WTC11 (cell line): ENCODE measurements at regions of chr1 and their contacts with region 1.

Region 1: GRCh38 chr1:8962812-8963530 is 17.3 kb downstream of the CA6 start:
- DNase-seq: peak; percentile 80
- ATAC-seq: peak; percentile 98
- H3K4me3 Mint-ChIP-seq: no peak overlapping the region
- H3K27ac Mint-ChIP-seq: no peak overlapping the region
- H3K4me1 Mint-ChIP-seq: peaks cover 5% of the 10 kb centered on the region
- H3K27me3 Mint-ChIP-seq: no peaks in the 10 kb centered on the region; the same call in 1 of the 2 replicates
- CTCF ChIP-seq: peak; percentile 55; the same call in 1 of the 2 replicates

Region 2: DNA sequence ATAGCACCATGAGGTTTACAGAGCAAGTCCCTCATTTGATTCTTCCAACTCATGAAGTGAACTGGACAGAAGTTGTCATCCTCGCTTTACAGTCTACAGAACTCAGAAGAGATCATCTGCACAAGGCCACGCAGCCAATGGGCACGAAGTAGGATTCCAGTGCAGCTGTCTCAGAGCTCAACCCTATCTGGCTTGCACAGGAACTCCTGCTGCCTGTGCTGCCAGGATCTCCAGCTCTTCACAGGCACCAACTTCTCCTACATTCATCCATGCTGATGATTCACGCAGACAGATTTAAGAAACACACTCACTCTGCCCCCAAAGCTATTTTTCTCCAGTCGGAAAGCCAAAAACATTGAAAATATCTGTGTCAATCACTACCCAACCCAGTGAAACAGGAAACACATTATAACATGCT is 302.6 kb before region 1 on chr1:
- CTCF ChIA-PET with region 1: no interaction called
- POLR2A ChIA-PET with region 1: no interaction called
- DNase-seq: no peak
- ATAC-seq: no peak; the same call in 1 of the 2 replicates
- H3K4me3 Mint-ChIP-seq: no peak overlapping the region
- H3K27ac Mint-ChIP-seq: no peak overlapping the region
- H3K4me1 Mint-ChIP-seq: peaks cover 15% of the 10 kb centered on the region
- H3K27me3 Mint-ChIP-seq: no peaks in the 10 kb centered on the region
- CTCF ChIP-seq: no peak

Region 3: DNA sequence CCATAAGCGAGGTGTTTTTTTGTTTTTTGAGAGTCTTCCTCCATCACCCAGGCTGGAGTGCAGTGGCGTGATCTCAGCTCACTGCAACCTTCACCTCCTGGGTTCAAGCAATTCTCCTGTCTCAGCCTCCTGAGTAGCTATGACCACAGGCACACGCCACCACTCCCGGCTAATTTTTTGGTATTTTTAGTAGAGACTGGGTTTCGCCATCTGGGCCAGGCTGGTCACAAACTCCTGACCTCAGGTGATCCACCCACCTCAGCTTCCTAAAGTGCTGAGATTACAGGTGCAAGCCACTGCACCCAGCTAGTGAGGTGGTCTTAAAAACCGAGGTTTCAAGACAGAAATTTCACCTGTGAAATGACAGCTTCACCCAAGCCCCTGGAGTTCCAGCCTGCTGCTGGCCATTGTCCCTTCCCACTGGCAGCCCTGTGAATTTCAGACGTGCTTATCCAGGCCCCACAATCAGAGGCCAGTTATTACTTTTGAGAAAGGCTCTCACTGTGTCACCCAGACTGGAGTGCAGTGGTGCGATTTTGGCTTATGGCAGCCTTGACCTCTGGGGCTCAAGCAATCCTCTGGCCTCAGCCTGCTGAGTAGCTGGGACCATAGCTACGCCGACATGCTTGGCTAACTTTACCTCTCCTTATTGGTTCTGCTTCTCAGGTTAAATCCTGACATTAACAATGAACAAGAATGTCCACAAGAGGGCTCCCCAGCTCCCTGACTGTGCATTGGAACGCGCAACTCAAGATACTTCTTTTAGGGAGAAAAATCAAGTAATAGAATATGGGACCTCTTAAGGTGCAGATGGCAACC is 103.9 kb before region 1 on chr1:
- CTCF ChIA-PET with region 1: interaction called, 11 read pairs
- POLR2A ChIA-PET with region 1: no interaction called
- DNase-seq: peak; percentile 47
- ATAC-seq: peak; percentile 14
- H3K4me3 Mint-ChIP-seq: no peak overlapping the region
- H3K27ac Mint-ChIP-seq: peak overlapping the region; percentile 94
- H3K4me1 Mint-ChIP-seq: peaks cover 27% of the 10 kb centered on the region
- H3K27me3 Mint-ChIP-seq: no peaks in the 10 kb centered on the region; the same call in 1 of the 2 replicates
- CTCF ChIP-seq: peak; percentile 30; the same call in 1 of the 2 replicates

Region 4: GRCh38 chr1:8910914-8911313 is 52.1 kb before region 1 on chr1:
- CTCF ChIA-PET with region 1: interaction called, 19 read pairs
- POLR2A ChIA-PET with region 1: interaction called, 3 read pairs
- DNase-seq: no peak
- ATAC-seq: peak; percentile 18
- H3K4me3 Mint-ChIP-seq: no peak overlapping the region
- H3K27ac Mint-ChIP-seq: no peak overlapping the region
- H3K4me1 Mint-ChIP-seq: peaks cover 42% of the 10 kb centered on the region
- H3K27me3 Mint-ChIP-seq: peaks cover 21% of the 10 kb centered on the region
- CTCF ChIP-seq: no peak

Region 5: DNA sequence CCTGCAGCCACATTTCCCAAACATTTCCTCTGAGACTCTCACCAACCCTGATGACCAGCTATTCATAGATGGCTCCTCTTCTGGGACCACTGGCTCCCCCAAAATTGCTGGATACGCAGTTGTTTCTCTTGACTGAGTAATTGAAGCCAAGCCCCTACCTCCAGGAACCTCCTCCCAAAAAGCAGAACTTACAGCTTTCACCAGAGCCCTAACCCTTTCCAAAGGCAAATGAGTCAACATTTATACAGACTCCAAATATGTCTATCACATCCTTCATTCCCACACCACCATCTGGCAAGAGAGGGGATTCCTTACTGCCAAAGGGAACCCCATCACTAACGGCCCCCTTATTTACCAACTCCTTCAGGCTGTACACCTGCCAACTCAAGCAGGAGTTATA is 37.6 kb before region 1 on chr1:
- CTCF ChIA-PET with region 1: interaction called, 10 read pairs
- POLR2A ChIA-PET with region 1: no interaction called
- DNase-seq: no peak
- ATAC-seq: no peak
- H3K4me3 Mint-ChIP-seq: no peak overlapping the region
- H3K27ac Mint-ChIP-seq: no peak overlapping the region
- H3K4me1 Mint-ChIP-seq: no peaks in the 10 kb centered on the region
- H3K27me3 Mint-ChIP-seq: no peaks in the 10 kb centered on the region
- CTCF ChIP-seq: no peak

Region 6: DNA sequence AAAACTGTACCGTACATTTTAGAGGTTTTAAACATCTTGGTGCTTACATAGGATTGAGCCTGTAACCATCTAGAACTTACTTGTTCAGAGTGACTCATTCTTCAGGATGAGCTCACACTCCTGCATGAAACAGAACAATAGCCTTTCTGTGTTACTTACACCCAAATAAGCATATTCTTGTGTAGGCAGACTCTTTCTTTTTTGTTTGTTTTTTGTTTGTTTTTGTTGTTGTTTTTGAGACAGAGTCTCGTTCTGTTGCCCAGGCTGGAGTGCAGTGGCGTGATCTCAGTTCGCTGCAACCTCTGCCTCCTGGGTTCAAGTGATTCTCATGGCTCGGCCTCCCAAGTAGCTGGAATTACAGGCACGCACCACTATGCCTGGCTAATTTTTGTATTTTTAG is 21.1 kb before region 1 on chr1:
- CTCF ChIA-PET with region 1: interaction called, 51 read pairs
- POLR2A ChIA-PET with region 1: no interaction called
- DNase-seq: no peak
- ATAC-seq: no peak
- H3K4me3 Mint-ChIP-seq: no peak overlapping the region
- H3K27ac Mint-ChIP-seq: no peak overlapping the region
- H3K4me1 Mint-ChIP-seq: peaks cover 51% of the 10 kb centered on the region
- H3K27me3 Mint-ChIP-seq: no peaks in the 10 kb centered on the region
- CTCF ChIP-seq: no peak

Region 7: DNA sequence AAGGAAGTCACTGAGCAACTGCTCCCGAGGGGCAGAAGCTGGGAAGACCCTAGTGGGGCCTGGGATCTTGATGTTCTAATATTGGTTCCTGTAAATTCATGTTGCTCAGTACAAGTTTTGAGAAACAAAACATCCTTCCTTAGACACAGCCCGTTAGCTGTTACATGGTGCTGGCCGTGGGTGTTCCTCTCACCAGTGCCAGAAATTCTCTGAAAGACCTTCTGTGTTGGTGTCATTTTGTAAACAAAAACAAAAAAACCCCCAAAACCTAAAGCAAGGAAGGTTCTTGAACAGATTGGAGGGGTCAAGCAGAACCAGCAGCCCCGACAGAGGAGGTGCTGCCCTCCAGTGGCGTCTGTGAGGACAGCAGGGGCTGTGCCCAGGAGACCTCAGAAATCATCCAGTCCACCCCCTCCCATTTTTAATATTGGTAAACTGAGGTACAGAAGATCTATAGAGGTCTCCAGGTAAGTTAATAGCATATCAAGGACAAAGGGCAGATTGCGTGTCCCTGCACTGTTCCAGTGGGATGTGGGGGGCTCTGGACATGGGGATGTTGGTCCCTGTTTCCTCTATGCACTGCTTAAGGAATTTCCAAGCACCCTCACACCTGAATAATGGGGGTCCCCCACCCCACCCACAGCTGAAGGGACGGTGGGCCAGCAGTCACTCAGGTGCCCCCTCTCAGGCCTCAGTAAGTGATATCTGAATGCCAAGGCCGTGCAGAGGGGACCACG is 25.1 kb after region 1 on chr1:
- CTCF ChIA-PET with region 1: interaction called, 45 read pairs
- POLR2A ChIA-PET with region 1: no interaction called
- DNase-seq: peak; percentile 81
- ATAC-seq: peak; percentile 92
- H3K4me3 Mint-ChIP-seq: no peak overlapping the region
- H3K27ac Mint-ChIP-seq: peak overlapping the region; percentile 57; the same call in 1 of the 2 replicates
- H3K4me1 Mint-ChIP-seq: 0 out of 2 replicates have a peak, but pooled peaks cover 2% of the 10 kb centered on the region
- H3K27me3 Mint-ChIP-seq: no peaks in the 10 kb centered on the region
- CTCF ChIP-seq: peak; percentile 82

Region 8: DNA sequence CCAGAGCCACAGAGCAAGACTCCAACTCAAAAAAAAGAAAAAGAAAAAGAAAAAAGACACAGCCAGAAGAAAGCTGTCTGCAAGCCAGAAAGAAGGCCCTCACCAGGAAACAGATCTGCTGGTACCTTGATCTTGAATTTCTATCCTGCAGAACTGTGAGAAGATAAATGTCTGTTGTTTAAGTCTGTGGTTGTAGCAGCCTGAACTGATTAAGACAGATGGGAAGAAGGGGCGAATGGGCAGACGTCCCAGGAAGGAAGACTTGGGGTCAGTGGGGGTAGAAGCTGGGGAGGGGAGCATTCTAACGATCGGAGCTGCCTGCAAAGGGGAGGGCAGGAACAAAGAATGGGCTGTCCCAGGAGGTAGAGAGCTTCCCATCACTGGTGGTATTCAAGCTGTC is 56.9 kb after region 1 on chr1:
- CTCF ChIA-PET with region 1: no interaction called
- POLR2A ChIA-PET with region 1: no interaction called
- DNase-seq: no peak
- ATAC-seq: no peak
- H3K4me3 Mint-ChIP-seq: no peak overlapping the region
- H3K27ac Mint-ChIP-seq: no peak overlapping the region
- H3K4me1 Mint-ChIP-seq: no peaks in the 10 kb centered on the region
- H3K27me3 Mint-ChIP-seq: no peaks in the 10 kb centered on the region
- CTCF ChIP-seq: no peak

Region 9: GRCh38 chr1:9033363-9033762 is 70.4 kb after region 1 on chr1:
- CTCF ChIA-PET with region 1: no interaction called
- POLR2A ChIA-PET with region 1: no interaction called
- DNase-seq: no peak
- ATAC-seq: no peak
- H3K4me3 Mint-ChIP-seq: no peak overlapping the region
- H3K27ac Mint-ChIP-seq: no peak overlapping the region
- H3K4me1 Mint-ChIP-seq: peaks cover 10% of the 10 kb centered on the region
- H3K27me3 Mint-ChIP-seq: peaks cover 3% of the 10 kb centered on the region; the same call in 1 of the 2 replicates
- CTCF ChIP-seq: no peak

Region 10: GRCh38 chr1:9101510-9102146 is 138.7 kb after region 1 on chr1:
- CTCF ChIA-PET with region 1: interaction called, 13 read pairs
- POLR2A ChIA-PET with region 1: no interaction called
- DNase-seq: peak; percentile 68
- ATAC-seq: peak; percentile 96
- H3K4me3 Mint-ChIP-seq: no peak overlapping the region
- H3K27ac Mint-ChIP-seq: no peak overlapping the region
- H3K4me1 Mint-ChIP-seq: peaks cover 5% of the 10 kb centered on the region; the same call in 1 of the 2 replicates
- H3K27me3 Mint-ChIP-seq: no peaks in the 10 kb centered on the region; the same call in 1 of the 2 replicates
- CTCF ChIP-seq: peak; percentile 50; the same call in 1 of the 2 replicates